ENCODE measurements at regions of chrX and their contacts with region 1.

Region 1: DNA sequence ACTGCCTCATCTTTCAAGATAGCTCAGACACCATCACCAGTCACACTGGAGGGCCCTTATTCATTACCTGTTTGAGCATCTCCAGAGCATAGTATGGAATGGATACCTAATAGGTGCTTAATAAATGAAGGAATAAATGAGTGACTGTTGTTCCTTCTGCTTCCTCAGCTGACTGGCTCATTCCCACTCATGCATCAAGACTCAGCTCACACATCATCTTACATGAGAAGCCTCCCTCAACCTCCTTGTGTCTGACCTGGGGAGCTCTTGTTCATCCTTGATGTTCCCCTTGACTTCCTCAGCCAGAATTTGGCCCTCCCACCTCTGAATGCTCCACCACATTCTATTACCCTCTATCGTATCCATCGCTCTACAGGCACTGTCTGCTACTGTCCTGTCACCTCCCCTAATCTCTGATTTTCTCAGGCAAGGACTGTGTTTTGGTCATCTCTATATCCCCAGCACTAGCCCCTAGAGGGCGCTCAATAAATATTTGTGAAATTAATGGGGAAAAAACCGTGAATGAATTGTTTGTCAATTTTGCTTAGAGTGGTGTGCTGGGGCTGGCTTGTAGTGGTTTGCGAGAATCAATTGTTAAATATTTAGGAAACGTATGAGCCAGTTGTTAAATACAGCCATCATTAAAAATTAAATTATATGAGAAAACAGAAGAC is 88.3 kb downstream of the NHSL2 start:
- DNase-seq: peak; percentile 40
- H3K4me3 ChIP-seq: no peak overlapping the region
- H3K27ac ChIP-seq: no peak overlapping the region
- H3K4me1 ChIP-seq: no peaks in the 10 kb centered on the region
- CTCF ChIP-seq: peak; percentile 80

Region 2: DNA sequence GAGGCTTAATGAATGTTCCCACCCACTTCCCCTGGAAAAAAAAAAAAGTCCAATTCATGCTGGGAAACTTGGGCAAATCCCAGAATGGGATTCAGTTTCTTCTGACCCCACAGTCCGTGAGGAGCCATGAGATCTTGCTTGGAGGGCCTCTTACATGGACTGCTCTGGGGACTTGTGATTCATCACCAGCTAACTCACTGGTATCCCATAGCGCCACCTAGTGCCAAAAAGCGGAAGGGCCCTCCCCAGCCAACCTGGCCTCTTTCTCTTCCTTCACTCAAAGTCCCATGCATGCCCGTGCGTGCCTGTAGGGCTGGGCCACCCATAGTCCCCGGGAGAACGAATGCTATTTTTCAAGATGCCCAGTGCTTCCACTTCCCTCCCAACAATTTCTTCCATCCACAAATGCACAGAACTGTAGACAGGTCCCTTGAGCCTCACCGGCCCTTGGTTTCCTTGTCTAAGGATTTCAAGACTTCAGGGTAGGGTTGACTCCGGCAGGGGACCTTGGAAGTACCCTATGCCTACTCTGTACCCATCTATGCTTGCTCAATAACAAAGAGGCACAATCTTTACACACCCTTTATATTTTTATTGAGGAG is 127.7 kb after region 1 on chrX:
- CTCF ChIA-PET with region 1: no interaction called
- POLR2A ChIA-PET with region 1: no interaction called
- intact Hi-C with region 1: loop called (anchors 5 kb)
- DNase-seq: peak; percentile 48
- H3K4me3 ChIP-seq: no peak overlapping the region
- H3K27ac ChIP-seq: no peak overlapping the region
- H3K4me1 ChIP-seq: no peaks in the 10 kb centered on the region
- CTCF ChIP-seq: peak; percentile 78